Activated B cell treated with CpG ODN at 0.5 μM for 24 hours (primary cell): ENCODE measurements at regions of chr1 and their contacts with region 1.

Region 1: DNA sequence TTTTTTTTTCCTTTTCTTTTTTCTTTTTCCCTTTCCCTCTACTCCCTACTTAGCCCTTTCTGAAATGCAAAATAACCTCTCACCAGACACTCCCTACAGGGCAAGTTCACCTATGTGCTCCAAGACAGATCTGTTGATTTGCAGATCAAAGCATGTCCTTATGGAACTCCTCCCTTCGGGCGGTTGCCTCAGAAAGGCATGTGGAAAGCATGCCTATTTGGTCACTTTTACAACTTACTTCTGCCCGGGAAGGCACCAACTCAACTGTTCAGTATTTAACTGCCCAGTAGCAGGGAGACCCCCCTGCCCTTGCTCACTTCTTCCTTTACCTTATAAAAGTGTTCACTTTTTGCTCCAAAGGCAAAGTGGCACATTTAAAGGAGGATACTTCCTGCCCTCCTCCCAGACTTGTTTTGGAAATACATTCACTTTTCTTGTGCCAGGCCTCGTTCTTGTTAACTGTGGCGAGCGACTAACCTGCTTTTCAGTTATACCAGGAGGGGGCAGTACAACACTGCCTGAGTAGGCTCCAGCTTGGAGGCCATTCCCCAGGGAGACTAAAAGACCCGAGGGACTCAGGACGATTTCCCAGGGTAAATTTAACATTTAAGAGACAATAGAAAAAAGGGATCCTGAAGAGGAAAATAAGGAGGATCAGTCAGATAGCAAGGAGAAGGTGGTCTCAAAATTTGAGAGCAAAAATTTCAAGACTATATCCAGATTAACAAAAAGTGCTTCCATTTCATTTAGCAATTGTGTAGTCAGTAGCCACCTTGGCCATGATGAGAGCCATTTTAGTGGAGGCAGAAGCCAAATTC is 12.3 kb upstream of the SLAMF7 start:
- DNase-seq: peak; percentile 32
- ATAC-seq: peak; percentile 88
- H3K4me3 Mint-ChIP-seq: no peak overlapping the region
- H3K27ac Mint-ChIP-seq: no peak overlapping the region
- H3K4me1 Mint-ChIP-seq: peaks cover 10% of the 10 kb centered on the region
- H3K27me3 Mint-ChIP-seq: no peaks in the 10 kb centered on the region
- CTCF ChIP-seq: peak; percentile 83

Region 2: DNA sequence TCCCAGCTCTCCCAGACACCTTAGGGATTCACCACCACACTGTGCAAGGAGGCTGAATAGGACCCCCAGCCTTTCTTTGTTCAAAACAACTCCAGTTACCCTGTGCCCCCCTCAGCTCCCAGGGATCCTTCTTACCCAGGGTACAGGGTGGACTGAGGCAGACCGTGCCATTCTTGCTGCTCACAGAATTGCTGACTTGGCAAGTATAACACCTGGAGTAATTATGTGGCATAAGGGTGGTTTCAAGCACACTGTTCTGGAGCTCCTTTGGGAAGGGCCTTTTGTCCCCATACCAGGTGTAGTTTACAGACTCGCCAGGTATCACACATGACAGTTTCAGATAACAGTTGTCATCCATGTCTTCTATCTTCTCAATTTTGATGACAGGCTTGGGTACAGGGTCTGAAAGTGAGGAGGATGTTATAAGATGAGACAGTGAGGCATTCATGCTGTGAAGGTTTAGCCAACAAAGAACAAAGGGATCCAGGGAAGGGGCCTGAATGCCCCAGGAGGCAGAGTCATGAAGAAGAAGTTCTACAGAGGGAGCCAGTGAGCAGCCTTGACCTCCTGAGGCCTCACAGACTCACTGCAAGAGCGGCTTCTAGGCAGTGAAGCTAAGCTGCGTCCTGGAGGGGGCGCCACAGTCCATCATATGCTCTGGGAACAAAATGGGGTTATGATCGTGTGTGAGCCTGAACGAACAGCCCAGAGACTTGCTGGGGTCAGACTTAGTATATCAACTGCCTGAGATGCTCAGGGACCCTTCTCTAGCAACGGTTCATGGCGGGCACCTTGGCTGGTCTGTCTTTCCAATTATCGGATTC is 45.4 kb before region 1 on chr1:
- CTCF ChIA-PET with region 1: interaction called, 10 read pairs
- POLR2A ChIA-PET with region 1: no interaction called
- intact Hi-C with region 1: loop called (anchors 1 kb)
- DNase-seq: peak; percentile 67
- ATAC-seq: peak; percentile 89
- H3K4me3 Mint-ChIP-seq: no peak overlapping the region
- H3K27ac Mint-ChIP-seq: peak overlapping the region; percentile 79
- H3K4me1 Mint-ChIP-seq: peaks cover 52% of the 10 kb centered on the region
- H3K27me3 Mint-ChIP-seq: no peaks in the 10 kb centered on the region
- CTCF ChIP-seq: no peak

Region 3: GRCh38 chr1:160777486-160778089 is 50.9 kb after region 1 on chr1:
- CTCF ChIA-PET with region 1: interaction called, 22 read pairs
- POLR2A ChIA-PET with region 1: interaction called, 5 read pairs
- intact Hi-C with region 1: no loop called
- DNase-seq: no peak
- ATAC-seq: no peak
- H3K4me3 Mint-ChIP-seq: no peak overlapping the region
- H3K27ac Mint-ChIP-seq: peak overlapping the region; percentile 35
- H3K4me1 Mint-ChIP-seq: peaks cover 88% of the 10 kb centered on the region
- H3K27me3 Mint-ChIP-seq: no peaks in the 10 kb centered on the region
- CTCF ChIP-seq: no peak

Region 4: DNA sequence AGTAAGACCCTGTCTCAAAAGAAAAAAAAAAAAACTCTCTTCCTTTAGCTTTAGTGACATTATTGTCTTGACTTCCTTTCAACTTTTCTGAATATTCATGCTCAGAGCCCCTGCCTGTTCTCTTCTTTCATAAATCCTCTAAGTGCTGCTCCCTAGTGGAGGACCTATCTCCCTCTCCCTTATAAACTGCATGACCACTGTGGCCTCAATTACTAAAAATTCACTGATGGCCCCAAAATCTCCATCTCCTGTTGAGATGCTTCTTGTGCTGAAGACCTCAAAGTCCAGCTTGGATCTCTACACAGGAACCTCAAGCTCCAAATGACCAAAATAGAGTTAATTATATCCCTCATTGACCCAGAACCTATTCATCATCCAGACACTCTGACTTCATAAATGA is 150.5 kb after region 1 on chr1:
- CTCF ChIA-PET with region 1: no interaction called
- POLR2A ChIA-PET with region 1: no interaction called
- intact Hi-C with region 1: loop called (anchors 2 kb)
- DNase-seq: no peak
- ATAC-seq: peak; percentile 28
- H3K4me3 Mint-ChIP-seq: no peak overlapping the region
- H3K27ac Mint-ChIP-seq: no peak overlapping the region
- H3K4me1 Mint-ChIP-seq: peaks cover 14% of the 10 kb centered on the region
- H3K27me3 Mint-ChIP-seq: peaks cover 6% of the 10 kb centered on the region
- CTCF ChIP-seq: no peak

Region 5: GRCh38 chr1:161739865-161740566 is 1013.3 kb after region 1 on chr1:
- CTCF ChIA-PET with region 1: no interaction called
- POLR2A ChIA-PET with region 1: no interaction called
- intact Hi-C with region 1: no loop called
- DNase-seq: peak; percentile 25
- ATAC-seq: peak; percentile 49
- H3K4me3 Mint-ChIP-seq: peak overlapping the region; percentile 52
- H3K27ac Mint-ChIP-seq: peak overlapping the region; percentile 88
- H3K4me1 Mint-ChIP-seq: peaks cover 54% of the 10 kb centered on the region
- H3K27me3 Mint-ChIP-seq: peaks cover 2% of the 10 kb centered on the region
- CTCF ChIP-seq: no peak

Region 6: DNA sequence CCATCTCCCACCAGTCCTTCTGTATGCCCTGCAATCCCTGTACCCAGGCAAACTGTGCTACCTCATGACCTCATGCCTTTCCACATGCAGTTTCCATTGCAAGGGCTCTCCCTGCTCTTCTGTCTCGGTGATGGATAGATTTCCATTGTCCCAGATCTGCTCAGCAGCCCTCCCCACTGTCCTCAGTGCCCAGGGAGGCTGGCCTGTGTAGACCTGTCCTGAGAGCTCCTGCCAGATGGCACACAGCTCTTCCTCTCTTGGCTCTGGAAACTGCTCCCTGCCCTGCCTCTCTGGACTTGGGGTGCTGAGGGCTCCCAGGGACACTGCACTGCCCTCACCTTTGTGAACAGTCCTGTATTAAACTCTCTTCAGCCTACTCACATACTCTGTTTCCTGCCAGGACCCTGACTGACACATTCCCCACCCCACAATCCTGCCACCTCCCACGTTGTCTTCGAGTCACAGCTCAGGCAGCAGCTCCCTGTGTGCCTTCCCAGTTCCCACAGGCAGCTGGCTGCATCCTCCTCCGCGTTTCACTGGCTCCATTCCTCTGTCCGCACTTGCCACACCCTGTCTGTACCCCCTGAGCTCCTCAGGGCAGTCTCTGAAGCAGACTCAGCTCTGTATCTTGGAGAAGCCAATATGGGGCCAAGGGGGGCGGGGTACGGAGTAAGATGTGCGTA is 1592.9 kb after region 1 on chr1:
- CTCF ChIA-PET with region 1: no interaction called
- POLR2A ChIA-PET with region 1: no interaction called
- intact Hi-C with region 1: no loop called
- DNase-seq: no peak
- ATAC-seq: no peak
- H3K4me3 Mint-ChIP-seq: no peak overlapping the region
- H3K27ac Mint-ChIP-seq: no peak overlapping the region
- H3K4me1 Mint-ChIP-seq: no peaks in the 10 kb centered on the region
- H3K27me3 Mint-ChIP-seq: peaks cover 14% of the 10 kb centered on the region
- CTCF ChIP-seq: no peak